ENCODE measurements at regions of chr9 and their contacts with region 1.

Region 1: DNA sequence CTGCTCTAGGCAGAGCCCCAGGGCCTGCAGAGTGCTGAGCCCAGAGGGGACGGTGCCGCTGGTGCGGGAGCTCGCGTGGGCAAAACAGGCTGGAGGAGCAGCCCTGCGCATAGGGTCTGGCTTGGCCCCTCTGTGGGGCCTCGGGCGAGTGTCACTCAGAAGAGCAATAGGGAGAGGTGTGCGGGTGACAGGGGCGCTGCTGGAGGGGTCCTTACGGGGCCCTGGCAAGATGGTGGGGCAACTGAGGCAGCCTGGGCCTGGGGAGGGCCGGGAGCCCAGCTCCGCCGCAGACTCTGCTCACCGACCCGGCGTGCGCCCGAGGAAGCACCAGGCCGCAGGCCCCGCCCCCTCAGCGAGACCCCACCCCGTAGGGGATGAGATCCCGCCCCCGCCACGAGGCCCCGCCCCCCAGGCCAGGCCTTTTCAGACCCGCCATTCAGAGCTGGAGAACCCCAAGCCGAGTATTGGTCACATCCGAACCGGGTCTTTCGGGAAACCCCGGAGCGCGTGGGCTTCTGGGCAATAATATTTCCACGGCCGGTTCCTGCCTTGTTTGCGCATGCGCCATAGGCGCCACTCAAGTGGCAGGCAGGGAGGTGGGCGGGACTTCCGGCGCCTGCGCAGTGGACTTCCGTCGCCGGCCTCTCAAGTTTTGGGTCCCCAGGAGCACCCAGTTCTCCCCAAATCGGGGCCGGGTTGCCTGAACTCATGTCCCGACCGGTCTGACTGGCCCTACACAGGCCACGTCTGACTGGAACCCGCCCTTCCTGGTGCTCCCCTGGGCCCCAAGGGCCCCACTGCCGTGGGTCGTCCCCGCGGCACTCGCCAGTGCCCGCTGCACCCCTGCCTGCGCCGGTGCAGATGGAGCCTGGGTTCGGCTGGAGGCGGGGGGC is 1.3 kb upstream of the RNF208 start:
- DNase-seq: peak; percentile 93 to 99 (median 99)
- ATAC-seq: peak; percentile 97
- H3K4me3 ChIP-seq: peak overlapping the region; percentile 86
- H3K4me3 Mint-ChIP-seq: peak overlapping the region; percentile 78 to 88 (median 82)
- H3K27ac ChIP-seq: peak overlapping the region; percentile 91
- H3K27ac Mint-ChIP-seq: peak overlapping the region in 7 of 9 donors; percentile 21 to 92 (median 75)
- H3K4me1 ChIP-seq: peaks cover 9 to 11% of the 10 kb centered on the region in 2 donors
- H3K4me1 Mint-ChIP-seq: peaks cover 5 to 15% (median 6%) of the 10 kb centered on the region in 7 donors
- H3K27me3 ChIP-seq: no peaks in the 10 kb centered on the region
- H3K27me3 Mint-ChIP-seq: peaks cover 0 to 6% (median 4%) of the 10 kb centered on the region in 5 donors

Region 2: DNA sequence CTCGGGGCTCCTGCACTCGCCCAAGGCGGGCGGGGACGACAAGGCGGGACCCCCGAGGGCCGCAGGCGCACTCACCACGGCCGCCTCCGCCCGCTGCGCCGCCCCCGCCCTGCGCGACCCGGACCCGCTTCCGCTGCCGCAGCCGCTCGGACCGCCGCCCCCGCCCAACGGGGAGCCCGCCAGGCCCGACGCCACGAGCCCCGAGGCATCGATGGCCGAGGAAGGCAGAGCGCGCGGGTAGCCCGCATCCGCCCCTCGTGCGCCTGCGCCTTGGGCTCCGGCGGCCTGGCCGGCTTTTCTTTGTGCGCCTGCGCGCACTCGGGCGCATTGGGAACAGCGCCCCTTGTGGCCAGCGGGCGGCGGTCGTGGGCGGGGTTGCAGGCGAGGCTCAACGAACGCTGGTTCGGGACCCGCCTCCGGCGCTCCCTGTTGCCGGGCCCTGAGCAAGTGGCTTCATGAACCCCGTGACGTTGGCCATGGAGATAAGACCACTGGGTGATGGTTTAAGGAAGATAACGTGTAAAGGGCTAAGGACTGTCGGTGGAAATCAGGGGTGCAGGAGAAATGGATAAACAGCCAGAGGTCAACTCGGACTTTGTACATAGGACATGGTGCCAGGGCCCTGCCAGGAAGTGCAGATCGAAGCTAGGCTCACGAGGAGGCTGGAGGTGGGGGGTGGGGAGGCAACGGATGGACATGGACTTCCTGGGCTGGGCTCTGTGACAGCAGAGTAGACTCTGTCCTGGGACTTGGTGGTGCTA is 278.6 kb before region 1 on chr9 and contains the starts of genes C8G and FBXW5:
- CTCF ChIA-PET with region 1: no interaction called
- POLR2A ChIA-PET with region 1: no interaction called
- intact Hi-C with region 1: loop called in 1 of 2 experiments (anchors 10 kb)
- DNase-seq: peak; percentile 88 to 99 (median 96)
- ATAC-seq: peak; percentile 92
- H3K4me3 ChIP-seq: peak within 1 kb of the TSS; percentile 72
- H3K4me3 Mint-ChIP-seq: peak within 1 kb of the TSS; percentile 71 to 85 (median 81)
- H3K27ac ChIP-seq: peak within 1 kb of the TSS; percentile 77
- H3K27ac Mint-ChIP-seq: peak within 1 kb of the TSS in 8 of 9 donors; percentile 63 to 90 (median 79)
- H3K4me1 ChIP-seq: peaks cover 10 to 11% of the 10 kb centered on the region in 2 donors
- H3K4me1 Mint-ChIP-seq: peaks cover 0 to 14% (median 5%) of the 10 kb centered on the region in 7 donors
- H3K27me3 ChIP-seq: no peaks in the 10 kb centered on the region
- H3K27me3 Mint-ChIP-seq: no peaks in the 10 kb centered on the region
- total RNA-seq, gene C8G: 0.77 to 3.6 (median 1.4) TPM
- total RNA-seq, gene FBXW5: 54.3 to 105 (median 94.5) TPM

Region 3: DNA sequence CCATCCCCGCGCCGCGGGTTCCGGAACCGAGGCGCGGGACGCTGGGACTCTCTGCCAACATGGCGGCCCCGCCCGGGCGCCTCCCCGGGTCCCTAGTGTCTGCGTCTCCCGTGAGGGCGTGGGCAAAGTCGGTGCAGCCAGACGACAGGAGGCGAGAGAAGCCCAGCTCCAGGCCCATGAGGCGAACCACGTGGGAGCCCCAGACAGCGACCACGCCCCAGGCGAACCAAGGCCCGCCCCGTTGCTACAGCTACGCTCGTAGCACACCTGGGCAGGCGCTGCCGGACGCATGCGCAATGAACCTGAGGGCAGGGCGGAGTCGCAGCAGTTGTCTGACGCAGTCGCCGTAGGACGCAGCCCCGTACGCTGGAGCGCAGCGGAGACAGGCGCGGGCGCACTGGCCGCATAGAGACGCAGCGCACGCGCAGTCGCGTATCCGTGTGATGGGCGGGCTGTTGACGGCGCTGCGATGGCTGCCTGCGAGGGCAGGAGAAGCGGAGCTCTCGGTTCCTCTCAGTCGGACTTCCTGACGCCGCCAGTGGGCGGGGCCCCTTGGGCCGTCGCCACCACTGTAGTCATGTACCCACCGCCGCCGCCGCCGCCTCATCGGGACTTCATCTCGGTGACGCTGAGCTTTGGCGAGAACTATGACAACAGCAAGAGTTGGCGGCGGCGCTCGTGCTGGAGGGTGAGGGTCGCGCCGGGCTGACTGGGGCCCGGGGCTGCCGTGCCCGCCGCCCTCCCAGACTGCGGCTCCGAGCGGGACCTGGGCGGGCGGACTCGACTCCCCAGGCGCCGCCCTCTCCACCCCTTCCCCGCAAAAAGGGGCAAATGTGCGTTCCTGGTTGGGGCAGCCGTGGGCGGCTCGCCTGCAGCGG is 136.6 kb before region 1 on chr9 and contains the start of gene MAN1B1:
- CTCF ChIA-PET with region 1: interaction called, 3 read pairs
- POLR2A ChIA-PET with region 1: interaction called, 16 read pairs
- intact Hi-C with region 1: loop called (anchors 1 kb)
- DNase-seq: peak; percentile 96 to 100 (median 99)
- ATAC-seq: peak; percentile 92
- H3K4me3 ChIP-seq: peak within 1 kb of the TSS; percentile 73
- H3K4me3 Mint-ChIP-seq: peak within 1 kb of the TSS; percentile 88 to 96 (median 92)
- H3K27ac ChIP-seq: peak within 1 kb of the TSS; percentile 92
- H3K27ac Mint-ChIP-seq: peak within 1 kb of the TSS; percentile 92 to 98 (median 95)
- H3K4me1 ChIP-seq: peaks cover 18% of the 10 kb centered on the region in 2 donors
- H3K4me1 Mint-ChIP-seq: peaks cover 25 to 34% (median 30%) of the 10 kb centered on the region in 7 donors
- H3K27me3 ChIP-seq: no peaks in the 10 kb centered on the region
- H3K27me3 Mint-ChIP-seq: no peaks in the 10 kb centered on the region
- total RNA-seq, gene MAN1B1: 57.3 to 74.2 (median 70.2) TPM

Region 4: DNA sequence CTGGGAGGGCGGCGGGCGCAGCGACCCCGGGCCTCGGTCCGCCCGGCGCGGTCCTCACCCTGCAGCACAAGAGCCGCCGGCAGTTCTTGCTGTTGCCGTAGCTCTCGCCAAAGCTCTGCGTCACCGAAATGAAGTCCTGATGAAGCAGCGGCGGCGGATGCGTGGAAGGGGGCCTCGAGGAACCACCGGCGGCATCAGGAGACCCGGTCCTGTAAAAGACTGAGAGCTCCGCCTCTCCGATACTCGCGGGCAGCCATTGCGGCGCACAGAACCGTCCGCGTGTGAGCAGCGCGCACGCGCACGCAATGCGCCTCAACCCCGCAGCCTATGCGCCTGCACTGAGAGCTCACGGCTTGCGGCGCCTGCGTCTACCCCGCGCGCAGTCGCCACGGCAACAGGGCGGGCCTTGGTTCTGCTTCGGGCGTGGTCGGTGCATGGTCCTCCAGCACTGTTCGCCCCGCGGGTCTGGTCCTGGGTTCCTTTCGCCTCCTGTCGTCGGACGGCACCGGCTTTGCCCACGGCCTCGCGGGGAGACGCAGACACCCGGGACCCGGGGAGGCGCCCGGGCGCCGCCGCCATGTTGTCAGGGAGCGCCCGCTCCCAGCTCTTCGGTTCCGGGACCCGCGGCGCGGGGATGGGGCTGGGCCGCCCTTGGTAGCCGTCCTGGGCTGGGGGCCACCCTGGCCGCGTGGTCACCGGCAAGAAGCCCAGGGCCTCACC is 93.7 kb before region 1 on chr9:
- CTCF ChIA-PET with region 1: interaction called, 4 read pairs
- POLR2A ChIA-PET with region 1: interaction called, 18 read pairs
- intact Hi-C with region 1: loop called (anchors 1 kb)
- DNase-seq: peak; percentile 74 to 93 (median 90)
- ATAC-seq: peak; percentile 98
- H3K4me3 ChIP-seq: peak overlapping the region; percentile 85
- H3K4me3 Mint-ChIP-seq: peak overlapping the region; percentile 83 to 93 (median 90)
- H3K27ac ChIP-seq: peak overlapping the region; percentile 85
- H3K27ac Mint-ChIP-seq: peak overlapping the region; percentile 67 to 88 (median 81)
- H3K4me1 ChIP-seq: peaks cover 21 to 28% of the 10 kb centered on the region in 2 donors
- H3K4me1 Mint-ChIP-seq: peaks cover 23 to 34% (median 27%) of the 10 kb centered on the region in 7 donors
- H3K27me3 ChIP-seq: no peaks in the 10 kb centered on the region
- H3K27me3 Mint-ChIP-seq: peaks cover 9 to 10% (median 9%) of the 10 kb centered on the region in 5 donors

Region 5: GRCh38 chr9:137188490-137189296 is 34.6 kb before region 1 on chr9 and contains the starts of genes ANAPC2 and SSNA1:
- CTCF ChIA-PET with region 1: interaction called, 3 read pairs
- POLR2A ChIA-PET with region 1: interaction called, 31 read pairs
- intact Hi-C with region 1: loop called (anchors 1 kb)
- DNase-seq: peak; percentile 86 to 99 (median 93)
- ATAC-seq: peak; percentile 91
- H3K4me3 ChIP-seq: peak within 1 kb of the TSS; percentile 98
- H3K4me3 Mint-ChIP-seq: peak within 1 kb of the TSS; percentile 91 to 99 (median 92)
- H3K27ac ChIP-seq: peak within 1 kb of the TSS; percentile 99
- H3K27ac Mint-ChIP-seq: peak within 1 kb of the TSS; percentile 85 to 96 (median 93)
- H3K4me1 ChIP-seq: peaks cover 30 to 32% of the 10 kb centered on the region in 2 donors
- H3K4me1 Mint-ChIP-seq: peaks cover 14 to 61% (median 32%) of the 10 kb centered on the region in 7 donors
- H3K27me3 ChIP-seq: no peaks in the 10 kb centered on the region
- H3K27me3 Mint-ChIP-seq: no peaks in the 10 kb centered on the region
- total RNA-seq, gene ANAPC2: 77.3 to 147 (median 134) TPM
- total RNA-seq, gene SSNA1: 37.9 to 75.6 (median 46.8) TPM

Region 6: DNA sequence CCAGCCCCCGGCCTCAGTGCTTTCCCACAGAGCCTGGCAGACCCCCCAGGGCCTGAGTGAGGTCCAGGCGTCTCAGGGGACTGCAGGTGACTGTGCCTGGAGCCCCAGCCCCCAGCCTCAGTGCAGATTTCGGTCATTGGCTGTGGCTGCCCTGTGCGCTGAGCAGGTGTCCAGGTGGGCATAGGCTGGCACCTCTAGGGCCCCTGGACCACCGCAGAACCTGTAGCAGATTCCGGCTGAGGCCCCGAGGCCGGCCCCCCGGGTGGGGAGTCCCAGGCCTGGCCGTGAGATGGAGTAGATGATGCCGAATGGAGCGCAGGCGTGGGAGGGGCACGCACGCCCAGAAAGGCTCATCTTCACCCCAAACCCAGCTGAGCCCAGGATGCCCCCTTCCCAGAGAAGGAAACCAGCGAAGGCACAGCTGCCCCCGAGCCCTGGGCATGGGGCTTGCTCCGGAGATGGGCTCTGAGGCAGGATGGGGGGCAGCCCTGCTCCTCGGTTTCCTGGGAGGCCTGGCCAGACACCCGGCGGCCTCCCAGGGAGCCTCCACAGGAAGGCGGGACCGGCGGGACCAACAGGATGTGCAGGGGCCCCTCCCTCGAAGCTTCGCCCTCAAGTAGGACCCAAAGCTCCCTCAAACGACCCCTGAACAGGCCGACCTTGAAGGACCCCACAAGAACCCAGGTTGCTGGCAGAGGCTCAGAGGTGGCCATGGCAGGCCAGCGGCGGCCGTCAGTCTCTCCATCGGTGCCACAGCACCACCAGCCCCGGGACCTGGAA is 187.8 kb after region 1 on chr9:
- CTCF ChIA-PET with region 1: no interaction called
- POLR2A ChIA-PET with region 1: no interaction called
- intact Hi-C with region 1: no loop called
- DNase-seq: no peak
- ATAC-seq: no peak
- H3K4me3 ChIP-seq: no peak overlapping the region
- H3K4me3 Mint-ChIP-seq: peak overlapping the region in 2 of 10 donors; percentile 33 to 56
- H3K27ac ChIP-seq: no peak overlapping the region
- H3K27ac Mint-ChIP-seq: no peak overlapping the region
- H3K4me1 ChIP-seq: peaks cover 3% of the 10 kb centered on the region in 2 donors
- H3K4me1 Mint-ChIP-seq: peaks cover 2 to 17% (median 5%) of the 10 kb centered on the region in 7 donors
- H3K27me3 ChIP-seq: no peaks in the 10 kb centered on the region
- H3K27me3 Mint-ChIP-seq: peaks cover 0 to under 1% (median 0%) of the 10 kb centered on the region in 5 donors

Measured in naive thymus-derived CD4-positive, alpha-beta T cell (primary cell).